Naive thymus-derived CD4-positive, alpha-beta T cell (primary cell): ENCODE measurements at regions of chr4 and their contacts with region 1.

Region 1: DNA sequence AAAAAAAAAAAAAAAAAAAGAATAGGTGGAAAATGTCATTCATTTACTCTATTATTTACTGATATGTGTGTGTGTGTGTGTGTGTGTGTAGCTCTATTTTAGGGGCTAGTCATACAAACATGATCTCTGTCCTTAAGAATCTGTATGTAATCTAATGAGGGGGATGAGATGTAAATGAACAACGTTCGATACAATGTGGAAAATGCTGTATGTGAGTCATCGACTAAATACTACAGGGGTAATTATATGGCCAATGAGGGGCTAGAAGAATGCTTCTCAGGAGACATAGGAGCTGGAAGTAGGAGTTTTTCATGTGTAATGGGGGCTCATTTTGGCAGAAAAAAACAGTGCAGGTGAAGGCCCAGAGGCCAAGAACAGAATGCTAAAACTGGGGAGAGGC is 41.9 kb downstream of the LEF1 start:
- DNase-seq: no peak
- ATAC-seq: no peak
- H3K4me3 ChIP-seq: no peak overlapping the region
- H3K4me3 Mint-ChIP-seq: peak overlapping the region; percentile 5 to 85 (median 54)
- H3K27ac ChIP-seq: peak overlapping the region; percentile 69
- H3K27ac Mint-ChIP-seq: peak overlapping the region; percentile 2 to 98 (median 90)
- H3K4me1 ChIP-seq: peaks cover 0 to 78% of the 10 kb centered on the region in 2 donors
- H3K4me1 Mint-ChIP-seq: peaks cover 38 to 99% (median 92%) of the 10 kb centered on the region in 7 donors
- H3K27me3 ChIP-seq: no peaks in the 10 kb centered on the region
- H3K27me3 Mint-ChIP-seq: no peaks in the 10 kb centered on the region

Region 2: GRCh38 chr4:107643021-107643420 is 483.8 kb before region 1 on chr4:
- CTCF ChIA-PET with region 1: no interaction called
- POLR2A ChIA-PET with region 1: no interaction called
- intact Hi-C with region 1: no loop called
- DNase-seq: no peak
- ATAC-seq: no peak
- H3K4me3 ChIP-seq: no peak overlapping the region
- H3K4me3 Mint-ChIP-seq: no peak overlapping the region
- H3K27ac ChIP-seq: no peak overlapping the region
- H3K27ac Mint-ChIP-seq: no peak overlapping the region
- H3K4me1 ChIP-seq: no peaks in the 10 kb centered on the region
- H3K4me1 Mint-ChIP-seq: peaks cover 0 to 5% (median 0%) of the 10 kb centered on the region in 7 donors
- H3K27me3 ChIP-seq: no peaks in the 10 kb centered on the region
- H3K27me3 Mint-ChIP-seq: no peaks in the 10 kb centered on the region

Region 3: GRCh38 chr4:108141213-108141950 is 14.6 kb after region 1 on chr4:
- CTCF ChIA-PET with region 1: interaction called, 7 read pairs
- POLR2A ChIA-PET with region 1: interaction called, 400 read pairs
- intact Hi-C with region 1: loop called in 1 of 2 experiments (anchors 1 kb)
- DNase-seq: peak in 1 of 9 donors; percentile 53
- ATAC-seq: no peak
- H3K4me3 ChIP-seq: peak overlapping the region; percentile 38
- H3K4me3 Mint-ChIP-seq: peak overlapping the region; percentile 79 to 91 (median 84)
- H3K27ac ChIP-seq: peak overlapping the region; percentile 81
- H3K27ac Mint-ChIP-seq: peak overlapping the region; percentile 85 to 98 (median 95)
- H3K4me1 ChIP-seq: peaks cover 26 to 97% of the 10 kb centered on the region in 2 donors
- H3K4me1 Mint-ChIP-seq: peaks cover 61 to 99% (median 95%) of the 10 kb centered on the region in 7 donors
- H3K27me3 ChIP-seq: no peaks in the 10 kb centered on the region
- H3K27me3 Mint-ChIP-seq: no peaks in the 10 kb centered on the region